ENCODE measurements at regions of chr19 and their contacts with region 1.

Region 1: DNA sequence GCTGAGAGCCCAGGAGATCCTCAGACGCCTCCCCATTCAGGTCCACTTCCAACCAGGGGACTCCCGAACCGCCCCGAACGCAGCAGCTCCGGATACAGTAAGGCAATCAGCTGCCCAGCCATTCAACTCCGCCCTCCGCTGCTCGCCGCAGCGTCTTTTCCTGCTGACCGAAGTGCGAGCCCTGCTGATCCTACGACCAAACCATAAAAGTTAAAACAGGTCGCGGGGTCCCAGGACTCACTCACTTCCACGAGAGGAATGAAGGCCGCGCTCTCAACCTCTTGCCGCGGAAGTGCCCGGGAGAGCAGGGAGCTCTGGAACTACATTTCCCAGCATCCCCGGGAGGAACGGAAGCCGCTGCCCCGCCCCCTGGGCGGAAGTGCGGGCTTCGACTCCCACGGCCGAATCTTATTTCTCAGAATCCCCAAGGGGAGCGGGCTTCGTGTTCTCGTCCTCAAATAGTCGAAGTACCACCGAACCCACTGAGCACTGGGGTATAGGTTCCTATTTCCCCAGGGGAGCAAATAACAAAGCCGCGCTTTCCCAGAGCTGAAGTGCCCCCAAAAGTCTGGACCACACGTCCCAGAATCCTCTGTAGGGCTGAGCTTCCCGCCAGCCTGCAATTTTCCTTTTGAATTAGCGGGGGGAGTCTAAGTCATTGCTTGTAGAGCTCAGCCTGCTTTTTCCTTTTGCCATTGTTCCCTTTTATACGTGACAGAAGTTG is at the start of gene ZNF45:
- DNase-seq: peak; percentile 88
- ATAC-seq: peak; percentile 98
- H3K4me3 ChIP-seq: peak within 1 kb of the TSS; percentile 81 to 94 (median 93)
- H3K27ac ChIP-seq: peak within 1 kb of the TSS; percentile 82
- H3K4me1 ChIP-seq: peaks cover 7% of the 10 kb centered on the region; the same call in 1 of the 2 replicates
- H3K27me3 ChIP-seq: no peaks in the 10 kb centered on the region
- CTCF ChIP-seq: no peak
- EP300 ChIP-seq: no peak
- POLR2A ChIP-seq: peak; percentile 72 to 74
- RAD21 ChIP-seq: 0 out of 2 replicates have a peak, but pooled peaks have one; percentile 3
- total RNA-seq, gene ZNF45: 11.3 and 13.0 TPM in 2 replicates

Region 2: GRCh38 chr19:43699506-43700394 is 235.4 kb before region 1 on chr19:
- CTCF ChIA-PET with region 1: no interaction called
- POLR2A ChIA-PET with region 1: no interaction called
- in situ Hi-C with region 1: no loop called
- intact Hi-C with region 1: no loop called
- DNase-seq: no peak
- ATAC-seq: peak; percentile 63
- H3K4me3 ChIP-seq: peak overlapping the region in 1 of 3 experiments; percentile 16; a peak in 1 of 6 replicates
- H3K27ac ChIP-seq: no peak overlapping the region
- H3K4me1 ChIP-seq: peaks cover 31% of the 10 kb centered on the region
- H3K27me3 ChIP-seq: peaks cover 0 to 1% of the 10 kb centered on the region in 2 experiments; a peak in 1 of 5 replicates
- CTCF ChIP-seq: peak; percentile 44
- EP300 ChIP-seq: no peak
- POLR2A ChIP-seq: no peak
- RAD21 ChIP-seq: no peak

Region 3: GRCh38 chr19:43826787-43827754 is 108.1 kb before region 1 on chr19 and contains the start of gene ZNF283:
- CTCF ChIA-PET with region 1: no interaction called
- POLR2A ChIA-PET with region 1: interaction called, 12 read pairs
- in situ Hi-C with region 1: no loop called
- intact Hi-C with region 1: loop called (anchors 10 kb)
- DNase-seq: peak; percentile 87
- ATAC-seq: peak; percentile 99
- H3K4me3 ChIP-seq: peak within 1 kb of the TSS; percentile 71 to 91 (median 81)
- H3K27ac ChIP-seq: peak within 1 kb of the TSS; percentile 51
- H3K4me1 ChIP-seq: peaks cover 5% of the 10 kb centered on the region; the same call in 1 of the 2 replicates
- H3K27me3 ChIP-seq: no peaks in the 10 kb centered on the region; a peak in 2 of 5 replicates
- CTCF ChIP-seq: no peak
- EP300 ChIP-seq: no peak
- POLR2A ChIP-seq: peak; percentile 60 to 61
- RAD21 ChIP-seq: no peak
- total RNA-seq, gene ZNF283: 11.1 and 13.2 TPM in 2 replicates

Region 4: GRCh38 chr19:43950834-43951645 is 15.9 kb after region 1 on chr19 and contains the start of gene ZNF221:
- CTCF ChIA-PET with region 1: no interaction called
- POLR2A ChIA-PET with region 1: interaction called, 36 read pairs
- in situ Hi-C with region 1: no loop called
- intact Hi-C with region 1: loop called (anchors 2 kb)
- DNase-seq: peak; percentile 91
- ATAC-seq: peak; percentile 99
- H3K4me3 ChIP-seq: peak within 1 kb of the TSS; percentile 95 to 97 (median 96)
- H3K27ac ChIP-seq: peak within 1 kb of the TSS; percentile 25
- H3K4me1 ChIP-seq: no peaks in the 10 kb centered on the region
- H3K27me3 ChIP-seq: no peaks in the 10 kb centered on the region; a peak in 1 of 5 replicates
- CTCF ChIP-seq: peak; percentile 76
- EP300 ChIP-seq: no peak
- POLR2A ChIP-seq: no peak
- RAD21 ChIP-seq: no peak
- total RNA-seq, gene ZNF221: 3.4 and 4.5 TPM in 2 replicates

Region 5: DNA sequence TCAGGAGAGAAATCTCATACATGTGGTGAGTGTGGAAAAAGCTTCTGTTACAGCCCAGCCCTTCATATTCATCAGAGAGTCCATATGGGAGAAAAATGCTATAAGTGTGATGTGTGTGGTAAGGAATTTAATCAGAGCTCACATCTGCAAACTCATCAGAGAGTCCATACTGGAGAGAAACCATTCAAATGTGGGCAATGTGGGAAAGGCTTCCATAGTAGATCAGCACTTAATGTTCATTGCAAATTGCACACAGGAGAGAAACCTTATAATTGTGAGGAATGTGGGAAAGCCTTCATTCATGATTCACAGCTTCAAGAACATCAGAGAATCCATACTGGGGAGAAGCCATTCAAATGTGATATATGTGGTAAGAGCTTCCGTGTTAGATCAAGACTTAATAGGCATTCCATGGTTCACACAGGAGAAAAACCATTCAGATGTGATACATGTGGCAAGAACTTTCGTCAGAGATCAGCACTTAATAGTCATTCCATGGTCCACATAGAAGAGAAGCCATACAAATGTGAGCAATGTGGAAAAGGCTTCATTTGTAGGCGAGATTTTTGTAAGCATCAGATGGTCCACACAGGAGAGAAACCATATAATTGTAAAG is 31.0 kb after region 1 on chr19:
- CTCF ChIA-PET with region 1: no interaction called
- POLR2A ChIA-PET with region 1: no interaction called
- in situ Hi-C with region 1: no loop called
- intact Hi-C with region 1: no loop called
- DNase-seq: no peak
- ATAC-seq: no peak
- H3K4me3 ChIP-seq: no peak overlapping the region
- H3K27ac ChIP-seq: no peak overlapping the region
- H3K4me1 ChIP-seq: no peaks in the 10 kb centered on the region
- H3K27me3 ChIP-seq: no peaks in the 10 kb centered on the region
- CTCF ChIP-seq: no peak
- EP300 ChIP-seq: no peak
- POLR2A ChIP-seq: no peak
- RAD21 ChIP-seq: no peak

Region 6: DNA sequence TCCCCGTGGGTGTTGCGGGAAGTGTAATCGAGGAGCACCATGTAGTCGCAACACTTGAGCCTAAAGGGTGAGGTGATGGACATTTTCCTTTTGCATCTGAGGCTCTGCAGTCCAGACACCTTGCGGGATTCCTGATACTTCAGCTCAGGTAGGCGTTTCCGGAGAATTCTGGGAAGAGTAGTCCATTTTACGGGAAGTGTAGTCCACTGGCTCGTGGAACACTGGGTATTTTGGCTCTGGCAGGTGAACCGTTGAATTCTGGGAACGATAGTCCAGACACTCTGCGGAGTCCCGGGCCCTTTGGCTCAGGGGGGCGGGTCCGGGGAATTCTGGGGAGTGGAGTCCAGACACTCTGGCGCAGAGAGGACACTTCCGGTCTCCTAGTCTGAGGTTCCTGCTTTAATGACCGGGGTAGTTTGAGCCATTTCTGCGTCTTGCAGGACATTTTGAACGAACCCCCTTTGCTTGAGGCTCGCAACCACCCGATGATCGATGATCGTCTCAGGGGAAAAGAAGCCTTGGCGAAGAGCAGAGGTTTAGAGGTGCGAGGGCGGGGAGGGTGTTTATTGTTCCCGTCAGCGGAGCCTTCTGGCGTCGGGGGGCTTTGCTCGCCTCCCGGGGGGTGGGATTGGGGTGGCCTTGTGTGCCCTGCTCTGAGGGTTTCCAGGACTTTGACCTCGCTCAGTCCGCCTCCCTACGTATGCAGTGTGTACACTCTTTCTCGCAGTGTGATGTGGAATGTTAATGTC is 116.7 kb after region 1 on chr19 and contains the start of gene ZNF223:
- CTCF ChIA-PET with region 1: no interaction called
- POLR2A ChIA-PET with region 1: interaction called, 10 read pairs
- in situ Hi-C with region 1: no loop called
- intact Hi-C with region 1: no loop called
- DNase-seq: peak; percentile 94
- ATAC-seq: peak; percentile 99
- H3K4me3 ChIP-seq: peak within 1 kb of the TSS; percentile 73 to 78 (median 78)
- H3K27ac ChIP-seq: peak within 1 kb of the TSS; percentile 89
- H3K4me1 ChIP-seq: peaks cover 32% of the 10 kb centered on the region
- H3K27me3 ChIP-seq: no peaks in the 10 kb centered on the region; a peak in 1 of 5 replicates
- CTCF ChIP-seq: no peak
- EP300 ChIP-seq: peak in 1 of 2 experiments; percentile 30; a peak in 1 of 4 replicates
- POLR2A ChIP-seq: peak; percentile 62 to 78; a peak in 3 of 4 replicates
- RAD21 ChIP-seq: no peak
- total RNA-seq, gene ZNF223: 4.8 and 5.6 TPM in 2 replicates

Region 7: GRCh38 chr19:44113138-44113783 is 178.1 kb after region 1 on chr19 and contains the start of gene ZNF225:
- CTCF ChIA-PET with region 1: no interaction called
- POLR2A ChIA-PET with region 1: interaction called, 3 read pairs
- in situ Hi-C with region 1: no loop called
- intact Hi-C with region 1: loop called (anchors 2 kb)
- DNase-seq: peak; percentile 97
- ATAC-seq: peak; percentile 99
- H3K4me3 ChIP-seq: peak within 1 kb of the TSS; percentile 82 to 92 (median 82)
- H3K27ac ChIP-seq: peak within 1 kb of the TSS; percentile 51
- H3K4me1 ChIP-seq: peaks cover 14% of the 10 kb centered on the region
- H3K27me3 ChIP-seq: no peaks in the 10 kb centered on the region; a peak in 1 of 5 replicates
- CTCF ChIP-seq: no peak
- EP300 ChIP-seq: peak in 1 of 2 experiments; percentile 27; a peak in 1 of 4 replicates
- POLR2A ChIP-seq: peak; percentile 56 to 71
- RAD21 ChIP-seq: 0 out of 2 replicates have a peak, but pooled peaks have one; percentile 6
- total RNA-seq, gene ZNF225: 3.3 and 4.6 TPM in 2 replicates

Measured in HepG2 (cell line).